CD4-positive, alpha-beta memory T cell (primary cell): ENCODE measurements at regions of chr12 and their contacts with region 1.

Region 1: DNA sequence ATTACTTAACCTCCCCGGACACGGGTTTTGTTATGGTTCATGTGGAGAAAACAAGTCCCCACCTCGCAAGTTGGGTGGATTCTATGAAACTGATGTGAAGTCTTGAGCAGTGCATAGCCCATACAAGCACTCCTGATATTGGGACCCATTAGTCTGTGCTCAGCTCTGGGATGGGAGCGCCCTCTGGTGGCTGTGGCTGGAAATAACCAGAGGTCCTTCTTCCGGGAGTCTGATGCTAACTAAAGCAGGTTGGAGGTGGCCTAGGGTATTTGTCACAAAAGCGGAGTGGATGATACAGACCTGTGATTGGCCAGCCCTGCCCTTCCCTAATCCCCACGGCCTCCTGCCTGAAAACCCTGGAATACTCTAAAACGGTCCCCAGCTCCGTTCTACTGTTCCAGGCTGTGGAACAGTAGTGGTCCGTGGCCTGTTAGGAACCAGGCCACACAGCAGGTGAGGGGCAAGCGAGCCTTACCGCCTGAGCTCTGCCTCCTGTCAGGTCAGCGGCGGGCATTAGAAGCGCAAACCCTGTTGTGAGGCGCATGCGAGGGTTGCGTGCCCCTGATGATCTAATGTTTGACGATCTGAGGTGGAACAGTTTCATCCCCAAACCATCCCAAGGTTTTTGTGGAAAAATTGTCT is 6.4 kb downstream of the SLC48A1 start:
- DNase-seq: peak; percentile 84 to 87 (median 86)
- H3K4me3 ChIP-seq: no peak overlapping the region
- H3K4me3 Mint-ChIP-seq: peak overlapping the region in 1 of 8 donors; percentile 12
- H3K27ac ChIP-seq: no peak overlapping the region
- H3K27ac Mint-ChIP-seq: peak overlapping the region in 4 of 7 donors; percentile 3 to 83 (median 81)
- H3K4me1 ChIP-seq: peaks cover 7% of the 10 kb centered on the region
- H3K4me1 Mint-ChIP-seq: peaks cover 7 to 24% (median 12%) of the 10 kb centered on the region in 4 donors
- H3K27me3 ChIP-seq: no peaks in the 10 kb centered on the region
- H3K27me3 Mint-ChIP-seq: no peaks in the 10 kb centered on the region

Region 2: GRCh38 chr12:47576289-47576945 is 203.0 kb before region 1 on chr12:
- CTCF ChIA-PET with region 1: no interaction called
- POLR2A ChIA-PET with region 1: no interaction called
- intact Hi-C with region 1: no loop called
- DNase-seq: no peak
- H3K4me3 ChIP-seq: no peak overlapping the region
- H3K4me3 Mint-ChIP-seq: no peak overlapping the region
- H3K27ac ChIP-seq: no peak overlapping the region
- H3K27ac Mint-ChIP-seq: peak overlapping the region in 1 of 7 donors; percentile 29
- H3K4me1 ChIP-seq: no peaks in the 10 kb centered on the region
- H3K4me1 Mint-ChIP-seq: peaks cover 0 to 1% (median 0%) of the 10 kb centered on the region in 4 donors
- H3K27me3 ChIP-seq: no peaks in the 10 kb centered on the region
- H3K27me3 Mint-ChIP-seq: peaks cover 3 to 11% of the 10 kb centered on the region in 2 donors

Region 3: DNA sequence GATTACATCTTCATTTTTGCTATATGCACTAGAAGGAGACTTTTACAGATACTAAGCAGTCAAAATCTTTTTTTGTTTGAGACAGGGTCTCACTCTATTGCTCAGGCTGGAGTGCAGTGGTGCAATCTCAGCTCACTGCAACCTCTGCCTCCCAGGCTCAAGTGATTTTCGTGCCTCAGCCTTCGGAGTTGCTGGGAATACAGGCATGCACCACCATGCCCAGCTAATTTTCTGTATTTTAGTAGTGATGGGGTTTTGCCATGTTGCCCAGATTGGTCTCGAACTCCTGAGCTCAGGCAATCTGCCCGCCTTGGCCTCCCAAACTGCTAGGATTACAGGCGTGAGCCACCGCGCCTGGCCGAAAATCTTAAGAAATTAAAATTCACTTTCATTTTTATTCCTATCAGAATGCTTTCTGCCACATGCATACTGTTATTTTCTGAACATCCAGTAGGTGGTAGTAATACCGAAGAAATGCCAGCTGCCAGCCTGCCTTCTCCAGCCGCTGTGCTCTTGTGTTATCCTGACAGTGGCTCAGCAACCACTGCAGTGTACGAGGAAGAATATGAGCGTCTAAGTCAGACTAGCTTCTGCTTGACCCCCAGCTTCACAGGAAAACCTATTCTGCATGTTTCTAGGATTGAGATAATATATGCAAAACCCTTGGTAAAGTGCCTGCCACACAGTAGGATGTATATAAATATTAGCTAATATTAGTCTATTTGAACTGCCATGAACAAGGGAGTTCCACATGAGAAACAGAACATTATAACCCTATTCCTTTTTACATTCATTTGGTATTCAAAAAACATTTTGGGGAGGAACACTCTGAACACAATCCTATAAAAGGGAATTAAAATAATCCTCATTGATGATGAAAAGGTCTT is 127.8 kb before region 1 on chr12:
- CTCF ChIA-PET with region 1: no interaction called
- POLR2A ChIA-PET with region 1: no interaction called
- intact Hi-C with region 1: loop called (anchors 1 kb)
- DNase-seq: peak; percentile 55 to 64 (median 60)
- H3K4me3 ChIP-seq: no peak overlapping the region
- H3K4me3 Mint-ChIP-seq: peak overlapping the region; percentile 37 to 77 (median 74)
- H3K27ac ChIP-seq: no peak overlapping the region
- H3K27ac Mint-ChIP-seq: peak overlapping the region in 6 of 7 donors; percentile 38 to 72 (median 70)
- H3K4me1 ChIP-seq: peaks cover 5% of the 10 kb centered on the region
- H3K4me1 Mint-ChIP-seq: peaks cover 5 to 10% (median 8%) of the 10 kb centered on the region in 4 donors
- H3K27me3 ChIP-seq: no peaks in the 10 kb centered on the region
- H3K27me3 Mint-ChIP-seq: no peaks in the 10 kb centered on the region

Region 4: DNA sequence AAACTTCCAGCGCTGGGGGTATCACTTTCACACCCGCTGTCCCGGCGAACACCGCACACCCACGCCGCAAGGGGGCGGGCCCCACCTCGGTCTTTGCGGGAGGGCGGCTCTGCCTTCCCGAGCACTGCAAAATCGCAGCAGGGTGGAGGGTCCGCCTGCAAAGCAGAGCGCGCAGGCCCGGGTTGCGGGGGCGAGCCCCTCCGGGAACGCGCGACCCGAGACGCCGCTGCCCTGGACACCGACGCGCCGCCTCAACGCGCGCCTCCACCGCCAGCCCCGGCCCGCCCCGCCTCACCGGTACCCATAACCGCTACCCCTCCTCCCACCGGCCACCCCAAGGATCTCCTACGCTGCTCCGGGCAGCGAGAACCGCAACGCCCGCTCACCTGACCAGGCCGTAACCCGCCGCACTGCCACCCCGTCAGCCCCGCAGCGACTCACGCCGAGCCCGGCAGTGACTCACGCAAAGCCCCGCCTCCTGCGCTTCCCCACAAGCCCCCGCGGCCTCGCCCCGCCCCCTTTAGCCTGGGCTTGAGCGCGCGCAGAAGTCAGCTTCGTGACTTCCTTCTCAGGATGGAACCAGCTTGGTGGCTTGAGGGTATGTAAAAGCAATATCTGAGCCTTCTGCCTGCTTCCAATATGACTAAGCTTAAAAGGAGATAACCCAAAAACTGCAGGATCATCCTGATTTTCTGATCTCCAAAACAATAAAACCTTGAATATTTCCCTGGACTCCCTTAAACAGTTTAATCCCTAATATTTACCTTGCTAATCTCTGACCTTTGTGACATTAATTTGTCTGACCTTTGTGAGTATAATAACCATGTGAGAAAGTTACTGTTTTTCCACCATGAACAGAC is 73.6 kb before region 1 on chr12 and contains the start of gene RPAP3:
- CTCF ChIA-PET with region 1: interaction called, 318 read pairs
- POLR2A ChIA-PET with region 1: no interaction called
- intact Hi-C with region 1: no loop called
- DNase-seq: peak; percentile 93 to 96 (median 93)
- H3K4me3 ChIP-seq: peak within 1 kb of the TSS; percentile 60 to 70
- H3K4me3 Mint-ChIP-seq: peak within 1 kb of the TSS; percentile 95 to 100 (median 98)
- H3K27ac ChIP-seq: peak within 1 kb of the TSS; percentile 81
- H3K27ac Mint-ChIP-seq: peak within 1 kb of the TSS; percentile 93 to 99 (median 97)
- H3K4me1 ChIP-seq: peaks cover 54% of the 10 kb centered on the region
- H3K4me1 Mint-ChIP-seq: peaks cover 35 to 56% (median 47%) of the 10 kb centered on the region in 4 donors
- H3K27me3 ChIP-seq: no peaks in the 10 kb centered on the region
- H3K27me3 Mint-ChIP-seq: no peaks in the 10 kb centered on the region
- total RNA-seq, gene RPAP3: 40.8 to 41.8 TPM

Region 5: GRCh38 chr12:47767216-47767724 is 12.2 kb before region 1 on chr12:
- CTCF ChIA-PET with region 1: interaction called, 38 read pairs
- POLR2A ChIA-PET with region 1: interaction called, 6 read pairs
- intact Hi-C with region 1: no loop called
- DNase-seq: peak; percentile 61 to 72 (median 67)
- H3K4me3 ChIP-seq: no peak overlapping the region
- H3K4me3 Mint-ChIP-seq: no peak overlapping the region
- H3K27ac ChIP-seq: no peak overlapping the region
- H3K27ac Mint-ChIP-seq: peak overlapping the region in 1 of 7 donors; percentile 7
- H3K4me1 ChIP-seq: peaks cover under 1% of the 10 kb centered on the region
- H3K4me1 Mint-ChIP-seq: peaks cover 4 to 14% (median 6%) of the 10 kb centered on the region in 4 donors
- H3K27me3 ChIP-seq: no peaks in the 10 kb centered on the region
- H3K27me3 Mint-ChIP-seq: no peaks in the 10 kb centered on the region

Region 6: GRCh38 chr12:47812797-47813510 is 33.5 kb after region 1 on chr12:
- CTCF ChIA-PET with region 1: interaction called, 21 read pairs
- POLR2A ChIA-PET with region 1: interaction called, 20 read pairs
- intact Hi-C with region 1: loop called (anchors 2 kb)
- DNase-seq: peak; percentile 79 to 97 (median 85)
- H3K4me3 ChIP-seq: peak overlapping the region; percentile 57 to 80
- H3K4me3 Mint-ChIP-seq: peak overlapping the region; percentile 82 to 92 (median 86)
- H3K27ac ChIP-seq: peak overlapping the region; percentile 91
- H3K27ac Mint-ChIP-seq: peak overlapping the region; percentile 93 to 99 (median 97)
- H3K4me1 ChIP-seq: peaks cover 97% of the 10 kb centered on the region
- H3K4me1 Mint-ChIP-seq: peaks cover 73 to 100% (median 88%) of the 10 kb centered on the region in 4 donors
- H3K27me3 ChIP-seq: no peaks in the 10 kb centered on the region
- H3K27me3 Mint-ChIP-seq: no peaks in the 10 kb centered on the region

Region 7: DNA sequence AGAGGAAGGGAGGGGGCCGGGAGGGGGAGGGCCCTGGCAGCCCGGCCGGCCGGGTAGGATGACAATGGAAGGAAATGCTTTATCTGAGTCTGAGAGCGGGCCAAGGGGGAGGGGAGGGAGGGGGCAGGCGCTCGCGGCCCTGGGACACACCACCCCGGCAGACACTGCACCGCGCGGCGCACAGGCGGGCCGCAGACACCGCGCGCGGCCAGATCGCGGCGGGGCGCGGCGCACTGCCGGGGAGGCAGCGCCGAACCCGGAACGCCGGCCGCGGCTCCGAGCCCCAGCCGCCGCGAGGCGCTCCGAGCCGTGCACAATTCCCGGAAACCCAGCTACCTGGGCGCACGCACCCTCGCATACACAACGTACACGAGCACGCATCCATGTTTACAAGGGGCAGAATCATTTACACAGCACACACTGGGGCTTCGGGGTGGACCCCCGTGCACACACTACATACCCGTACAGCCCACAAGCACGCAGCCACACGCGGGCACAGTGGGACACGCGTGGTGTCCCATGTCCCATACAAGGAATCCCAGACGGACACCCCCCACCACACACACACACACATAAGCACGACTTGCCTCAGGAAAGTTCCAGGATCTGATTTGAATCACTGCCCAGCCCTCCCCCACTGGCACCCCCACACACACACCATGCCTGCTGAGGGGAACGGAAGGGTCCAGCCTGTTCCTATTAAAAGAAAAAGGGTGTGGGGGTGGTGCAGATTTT is 40.6 kb after region 1 on chr12 and contains the start of gene HDAC7:
- CTCF ChIA-PET with region 1: interaction called, 21 read pairs
- POLR2A ChIA-PET with region 1: interaction called, 20 read pairs
- intact Hi-C with region 1: no loop called
- DNase-seq: peak; percentile 55 to 86 (median 68)
- H3K4me3 ChIP-seq: peak within 1 kb of the TSS; percentile 79 to 84
- H3K4me3 Mint-ChIP-seq: peak within 1 kb of the TSS; percentile 91 to 97 (median 95)
- H3K27ac ChIP-seq: peak within 1 kb of the TSS; percentile 79
- H3K27ac Mint-ChIP-seq: peak within 1 kb of the TSS; percentile 93 to 98 (median 97)
- H3K4me1 ChIP-seq: peaks cover 87% of the 10 kb centered on the region
- H3K4me1 Mint-ChIP-seq: peaks cover 62 to 87% (median 77%) of the 10 kb centered on the region in 4 donors
- H3K27me3 ChIP-seq: no peaks in the 10 kb centered on the region
- H3K27me3 Mint-ChIP-seq: no peaks in the 10 kb centered on the region
- total RNA-seq, gene HDAC7: 139 to 142 TPM

Region 8: DNA sequence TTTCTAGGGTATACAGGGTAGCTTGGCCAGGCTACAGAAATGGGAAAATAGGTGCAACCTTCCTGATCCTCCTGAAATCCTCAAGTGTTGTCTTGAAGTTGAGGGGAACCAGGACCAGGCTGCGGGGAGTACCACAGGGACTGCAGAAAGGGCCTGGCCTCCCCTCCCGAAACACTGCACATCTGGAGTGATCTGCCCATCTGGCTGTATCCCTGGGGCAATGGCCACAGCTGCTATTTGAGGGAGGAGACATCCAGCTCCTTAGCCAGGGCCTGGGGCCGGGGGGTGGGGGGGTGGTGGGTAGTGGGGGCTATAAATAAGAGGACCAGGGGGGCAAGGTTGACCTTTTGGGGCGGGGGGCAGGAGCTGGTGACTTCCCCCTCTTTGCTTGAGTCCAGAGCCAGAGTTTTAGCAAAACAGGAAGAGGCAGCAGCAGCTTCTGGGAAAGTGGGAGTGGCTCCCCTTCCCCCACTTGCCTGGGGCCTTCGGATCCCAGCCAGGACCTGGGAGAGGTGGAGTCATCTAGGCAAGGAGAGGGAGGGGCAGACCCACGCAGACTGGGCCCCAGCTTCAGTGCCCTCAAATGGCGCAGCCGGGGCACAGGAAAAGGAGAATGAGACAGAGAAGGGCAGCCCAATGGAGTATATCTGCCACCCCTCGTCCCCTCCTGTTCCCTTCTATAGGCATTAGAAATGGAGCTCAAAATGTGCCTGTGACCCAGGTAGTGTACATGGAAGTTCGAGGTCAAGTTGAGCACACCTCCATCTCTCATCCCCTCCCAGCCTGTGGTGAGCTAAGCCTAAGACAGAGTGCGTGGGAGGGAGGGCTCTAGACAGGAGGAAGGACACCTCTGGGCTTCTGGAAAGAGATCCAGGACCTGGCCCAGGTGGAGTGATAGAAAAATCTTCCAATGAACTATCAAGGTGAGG is 49.5 kb after region 1 on chr12:
- CTCF ChIA-PET with region 1: interaction called, 484 read pairs
- POLR2A ChIA-PET with region 1: interaction called, 27 read pairs
- intact Hi-C with region 1: no loop called
- DNase-seq: no peak
- H3K4me3 ChIP-seq: no peak overlapping the region
- H3K4me3 Mint-ChIP-seq: peak overlapping the region in 4 of 8 donors; percentile 20 to 62 (median 48)
- H3K27ac ChIP-seq: peak overlapping the region; percentile 26
- H3K27ac Mint-ChIP-seq: peak overlapping the region; percentile 72 to 92 (median 83)
- H3K4me1 ChIP-seq: peaks cover 97% of the 10 kb centered on the region
- H3K4me1 Mint-ChIP-seq: peaks cover 49 to 93% (median 78%) of the 10 kb centered on the region in 4 donors
- H3K27me3 ChIP-seq: no peaks in the 10 kb centered on the region
- H3K27me3 Mint-ChIP-seq: no peaks in the 10 kb centered on the region

Region 9: GRCh38 chr12:47870175-47870781 is 90.9 kb after region 1 on chr12:
- CTCF ChIA-PET with region 1: no interaction called
- POLR2A ChIA-PET with region 1: no interaction called
- intact Hi-C with region 1: no loop called
- DNase-seq: no peak
- H3K4me3 ChIP-seq: no peak overlapping the region
- H3K4me3 Mint-ChIP-seq: no peak overlapping the region
- H3K27ac ChIP-seq: no peak overlapping the region
- H3K27ac Mint-ChIP-seq: no peak overlapping the region
- H3K4me1 ChIP-seq: no peaks in the 10 kb centered on the region
- H3K4me1 Mint-ChIP-seq: no peaks in the 10 kb centered on the region
- H3K27me3 ChIP-seq: no peaks in the 10 kb centered on the region
- H3K27me3 Mint-ChIP-seq: no peaks in the 10 kb centered on the region